ENCODE measurements at regions of chr7 and their contacts with region 1.

Region 1: GRCh38 chr7:69927461-69927860 is 329.2 kb downstream of the AUTS2 start:
- DNase-seq: no peak
- H3K4me3 ChIP-seq: no peak overlapping the region
- H3K27ac ChIP-seq: no peak overlapping the region
- H3K4me1 ChIP-seq: no peaks in the 10 kb centered on the region
- H3K27me3 ChIP-seq: no peaks in the 10 kb centered on the region
- CTCF ChIP-seq: no peak
- POLR2A ChIP-seq: no peak

Region 2: GRCh38 chr7:68446183-68446582 is 1481.3 kb before region 1 on chr7:
- intact Hi-C with region 1: loop called (anchors 5 kb)
- DNase-seq: no peak
- H3K4me3 ChIP-seq: no peak overlapping the region
- H3K27ac ChIP-seq: no peak overlapping the region
- H3K4me1 ChIP-seq: no peaks in the 10 kb centered on the region
- H3K27me3 ChIP-seq: no peaks in the 10 kb centered on the region
- CTCF ChIP-seq: no peak
- POLR2A ChIP-seq: no peak

Region 3: GRCh38 chr7:69859342-69859741 is 68.1 kb before region 1 on chr7:
- intact Hi-C with region 1: no loop called
- DNase-seq: no peak
- H3K4me3 ChIP-seq: no peak overlapping the region
- H3K27ac ChIP-seq: no peak overlapping the region
- H3K4me1 ChIP-seq: no peaks in the 10 kb centered on the region
- H3K27me3 ChIP-seq: no peaks in the 10 kb centered on the region
- CTCF ChIP-seq: no peak
- POLR2A ChIP-seq: no peak

Region 4: DNA sequence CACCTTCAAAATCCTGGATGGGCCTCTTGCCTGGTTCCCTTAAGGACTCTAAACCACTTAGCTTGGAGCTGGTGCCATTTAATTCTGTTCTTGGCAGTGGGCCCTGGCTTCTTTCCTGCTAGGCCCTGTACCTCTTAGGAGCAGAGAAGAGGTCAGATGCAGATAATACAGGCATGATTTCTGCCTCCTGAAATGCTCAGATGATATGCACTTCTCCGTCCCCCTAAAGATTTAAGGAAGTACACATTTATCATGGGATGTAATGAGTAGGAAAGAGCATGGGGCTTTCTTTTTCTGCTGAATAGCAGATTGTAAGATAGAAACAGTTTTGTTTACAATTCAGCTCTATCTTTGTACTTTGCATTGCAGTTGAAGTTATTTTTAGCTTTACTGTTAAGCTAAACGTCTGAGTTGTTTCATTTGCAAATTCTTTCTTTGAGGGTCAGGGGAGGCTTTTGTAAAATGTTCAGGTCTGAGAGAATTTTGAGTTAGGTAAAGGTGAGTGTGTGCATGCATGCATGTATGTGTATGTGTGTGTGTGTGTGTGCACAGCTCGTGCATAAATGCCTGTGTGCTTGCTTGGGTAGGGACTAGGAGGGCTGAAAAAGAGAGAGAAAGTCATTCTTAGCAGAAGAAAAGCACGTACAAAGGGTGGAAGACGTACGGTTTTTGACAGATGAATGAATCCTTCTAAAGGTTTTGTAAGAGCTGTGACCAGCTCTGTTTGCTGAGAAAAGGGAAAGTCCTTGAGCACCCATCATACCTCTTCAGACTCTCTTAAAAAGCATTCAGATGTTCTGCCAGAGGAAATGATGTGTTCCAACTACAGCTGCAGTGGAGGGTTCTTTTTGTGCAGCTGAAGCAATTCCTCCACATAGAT is 35.0 kb after region 1 on chr7:
- intact Hi-C with region 1: no loop called
- DNase-seq: peak in 1 of 2 donors; percentile 24
- H3K4me3 ChIP-seq: no peak overlapping the region
- H3K27ac ChIP-seq: peak overlapping the region in 1 of 2 donors; percentile 13
- H3K4me1 ChIP-seq: peaks cover 5 to 9% of the 10 kb centered on the region in 2 donors
- H3K27me3 ChIP-seq: no peaks in the 10 kb centered on the region
- CTCF ChIP-seq: no peak
- POLR2A ChIP-seq: no peak

Region 5: DNA sequence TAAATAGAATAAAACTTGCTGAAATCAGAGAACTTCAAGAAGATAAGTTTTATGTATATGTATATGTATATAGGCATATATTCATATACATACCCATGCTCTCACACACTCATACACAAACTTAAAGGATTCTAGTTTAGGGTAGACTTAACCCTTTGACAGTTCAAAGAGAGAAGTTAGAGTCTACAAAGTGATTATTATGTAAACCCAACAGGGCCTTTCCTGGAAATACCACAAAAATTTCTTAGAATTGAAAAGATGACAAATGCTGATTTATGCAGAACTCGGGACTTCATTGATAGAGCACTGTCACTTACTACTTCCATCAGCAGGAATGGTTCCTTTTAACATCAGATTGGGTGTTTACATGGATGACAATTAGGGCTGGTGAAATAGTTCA is 434.4 kb after region 1 on chr7:
- intact Hi-C with region 1: no loop called
- DNase-seq: no peak
- H3K4me3 ChIP-seq: no peak overlapping the region
- H3K27ac ChIP-seq: no peak overlapping the region
- H3K4me1 ChIP-seq: no peaks in the 10 kb centered on the region
- H3K27me3 ChIP-seq: no peaks in the 10 kb centered on the region
- CTCF ChIP-seq: no peak
- POLR2A ChIP-seq: no peak

Region 6: DNA sequence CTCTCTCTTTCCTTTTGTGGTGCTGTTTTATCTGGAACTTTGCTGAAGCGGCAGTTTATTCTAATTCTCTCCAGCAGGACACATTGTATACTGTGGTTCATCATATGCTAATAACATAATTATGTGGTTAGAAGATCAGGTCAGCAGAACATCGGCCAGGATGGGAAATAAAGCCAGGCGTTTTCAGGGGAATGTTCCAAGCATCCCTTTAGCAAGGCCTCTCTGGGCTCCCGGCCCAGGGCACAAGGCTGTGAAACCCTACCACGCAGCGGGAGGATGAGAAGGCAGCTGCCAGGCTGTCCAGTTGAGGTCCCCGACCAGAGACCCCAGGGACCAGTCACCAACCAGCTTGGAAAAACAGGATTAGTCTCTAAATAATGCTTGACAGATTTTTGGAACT is 1092.2 kb after region 1 on chr7:
- intact Hi-C with region 1: no loop called
- DNase-seq: peak in 1 of 2 donors; percentile 23
- H3K4me3 ChIP-seq: no peak overlapping the region
- H3K27ac ChIP-seq: peak overlapping the region in 1 of 2 donors; percentile 74
- H3K4me1 ChIP-seq: no peaks in the 10 kb centered on the region
- H3K27me3 ChIP-seq: no peaks in the 10 kb centered on the region
- CTCF ChIP-seq: no peak
- POLR2A ChIP-seq: no peak

Measured in breast epithelium (tissue), 4 donors.